HCT116 (cell line): ENCODE measurements at regions of chr10 and their contacts with region 1.

Region 1: DNA sequence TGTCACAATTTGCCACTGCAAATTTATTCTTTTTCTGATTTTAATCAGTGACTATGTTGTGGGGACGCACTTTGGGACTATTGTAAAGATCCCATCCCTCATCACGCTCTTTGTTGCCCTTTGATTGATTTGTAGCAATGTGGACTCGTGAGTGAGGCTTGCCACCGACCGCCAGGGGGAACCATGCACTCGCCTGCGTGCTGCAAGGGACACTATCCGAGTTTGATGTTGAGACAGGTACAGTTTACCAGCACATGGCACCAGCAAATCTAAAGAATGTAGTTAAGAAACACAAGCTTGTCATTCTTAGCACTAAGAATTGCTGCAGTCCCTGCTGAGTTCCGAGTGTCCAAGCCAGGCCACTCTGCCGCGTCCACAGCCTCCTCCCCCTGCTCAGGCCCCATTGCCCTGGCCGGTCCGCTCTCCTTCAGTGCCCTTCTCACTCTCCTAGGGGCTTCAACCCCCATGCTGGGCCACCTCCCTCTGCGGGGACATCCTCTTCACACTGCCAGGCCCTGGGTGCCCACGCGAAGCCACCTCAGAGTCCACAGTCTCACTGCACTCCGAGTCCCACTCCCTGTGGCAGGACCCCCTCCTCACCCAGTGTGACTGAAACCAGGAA is 2.0 kb upstream of the SFTPA2 start:
- DNase-seq: peak; percentile 34
- ATAC-seq: peak; percentile 98
- H3K4me3 ChIP-seq: no peak overlapping the region
- H3K27ac ChIP-seq: no peak overlapping the region
- H3K4me1 ChIP-seq: no peaks in the 10 kb centered on the region
- H3K27me3 ChIP-seq: no peaks in the 10 kb centered on the region
- CTCF ChIP-seq: peak; percentile 82 to 95 (median 94)
- POLR2A ChIP-seq: no peak
- RAD21 ChIP-seq: peak; percentile 83

Region 2: DNA sequence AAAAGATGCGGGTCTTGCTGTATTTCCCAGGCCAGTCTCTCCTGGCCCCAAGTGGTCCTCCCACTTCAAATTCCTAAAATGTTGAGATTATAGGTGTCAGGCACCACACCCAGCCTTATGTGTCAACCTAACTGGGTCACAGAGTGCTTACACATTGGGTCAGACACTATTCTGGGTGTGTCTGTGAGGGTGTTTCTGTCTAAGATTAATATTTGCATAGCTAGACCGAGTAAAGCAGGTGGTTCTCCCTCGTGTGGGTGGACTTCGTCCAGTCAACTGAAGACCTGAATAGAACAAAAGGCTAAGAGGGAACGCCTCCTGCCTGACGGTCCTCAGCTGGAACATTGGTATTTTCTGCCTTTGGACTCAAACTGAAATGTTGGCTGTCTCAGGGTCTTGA is 203.5 kb before region 1 on chr10:
- CTCF ChIA-PET with region 1: no interaction called
- POLR2A ChIA-PET with region 1: no interaction called
- RAD21 ChIA-PET with region 1: no interaction called
- intact Hi-C with region 1: no loop called
- DNase-seq: no peak
- ATAC-seq: no peak
- H3K4me3 ChIP-seq: no peak overlapping the region
- H3K27ac ChIP-seq: no peak overlapping the region
- H3K4me1 ChIP-seq: no peaks in the 10 kb centered on the region
- H3K27me3 ChIP-seq: no peaks in the 10 kb centered on the region
- CTCF ChIP-seq: no peak
- POLR2A ChIP-seq: no peak
- RAD21 ChIP-seq: no peak

Region 3: GRCh38 chr10:79586933-79587332 is 24.7 kb after region 1 on chr10:
- CTCF ChIA-PET with region 1: no interaction called
- POLR2A ChIA-PET with region 1: no interaction called
- RAD21 ChIA-PET with region 1: no interaction called
- intact Hi-C with region 1: no loop called
- DNase-seq: no peak
- ATAC-seq: no peak
- H3K4me3 ChIP-seq: no peak overlapping the region
- H3K27ac ChIP-seq: no peak overlapping the region
- H3K4me1 ChIP-seq: no peaks in the 10 kb centered on the region
- H3K27me3 ChIP-seq: peaks cover 7% of the 10 kb centered on the region
- CTCF ChIP-seq: no peak
- POLR2A ChIP-seq: no peak
- RAD21 ChIP-seq: no peak

Region 4: GRCh38 chr10:79608505-79609375 is 46.5 kb after region 1 on chr10:
- CTCF ChIA-PET with region 1: no interaction called
- POLR2A ChIA-PET with region 1: no interaction called
- RAD21 ChIA-PET with region 1: no interaction called
- intact Hi-C with region 1: loop called (anchors 2 kb)
- DNase-seq: peak; percentile 24
- ATAC-seq: peak; percentile 90
- H3K4me3 ChIP-seq: no peak overlapping the region
- H3K27ac ChIP-seq: no peak overlapping the region
- H3K4me1 ChIP-seq: no peaks in the 10 kb centered on the region
- H3K27me3 ChIP-seq: no peaks in the 10 kb centered on the region
- CTCF ChIP-seq: peak; percentile 93 to 94 (median 94)
- POLR2A ChIP-seq: no peak
- RAD21 ChIP-seq: peak; percentile 79

Region 5: DNA sequence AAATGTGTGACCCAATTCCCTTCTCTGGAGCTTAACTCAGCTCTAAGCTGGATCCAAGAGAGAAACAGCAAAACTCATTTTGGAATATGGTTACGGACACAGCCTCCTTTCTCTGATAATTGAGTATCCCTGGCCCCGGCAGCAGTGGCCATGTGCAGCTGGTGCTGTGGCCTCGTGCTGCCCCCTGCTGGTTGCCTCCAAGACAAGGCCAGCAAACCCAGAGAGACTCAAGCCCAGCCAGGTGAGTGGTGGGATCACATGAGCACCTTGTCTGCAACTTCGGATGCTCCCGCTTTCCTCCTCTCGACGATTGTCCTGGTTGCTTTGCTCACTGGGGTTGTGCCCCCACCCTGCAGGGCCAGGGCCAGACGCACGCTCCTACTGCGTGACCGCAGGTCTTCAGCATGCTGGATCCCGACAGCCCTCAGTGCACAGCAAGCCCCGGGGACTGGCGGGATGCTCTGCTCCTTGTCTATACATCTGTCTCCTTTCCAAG is 367.2 kb after region 1 on chr10:
- CTCF ChIA-PET with region 1: no interaction called
- POLR2A ChIA-PET with region 1: no interaction called
- RAD21 ChIA-PET with region 1: no interaction called
- intact Hi-C with region 1: loop called (anchors 1 kb)
- DNase-seq: peak; percentile 62
- ATAC-seq: peak; percentile 98
- H3K4me3 ChIP-seq: no peak overlapping the region
- H3K27ac ChIP-seq: no peak overlapping the region
- H3K4me1 ChIP-seq: peaks cover 0 to 5% of the 10 kb centered on the region in 2 experiments; a peak in 1 of 4 replicates
- H3K27me3 ChIP-seq: 0 out of 2 replicates have a peak, but pooled peaks cover 5% of the 10 kb centered on the region
- CTCF ChIP-seq: peak; percentile 89 to 94 (median 93)
- POLR2A ChIP-seq: no peak
- RAD21 ChIP-seq: peak; percentile 97

Region 6: DNA sequence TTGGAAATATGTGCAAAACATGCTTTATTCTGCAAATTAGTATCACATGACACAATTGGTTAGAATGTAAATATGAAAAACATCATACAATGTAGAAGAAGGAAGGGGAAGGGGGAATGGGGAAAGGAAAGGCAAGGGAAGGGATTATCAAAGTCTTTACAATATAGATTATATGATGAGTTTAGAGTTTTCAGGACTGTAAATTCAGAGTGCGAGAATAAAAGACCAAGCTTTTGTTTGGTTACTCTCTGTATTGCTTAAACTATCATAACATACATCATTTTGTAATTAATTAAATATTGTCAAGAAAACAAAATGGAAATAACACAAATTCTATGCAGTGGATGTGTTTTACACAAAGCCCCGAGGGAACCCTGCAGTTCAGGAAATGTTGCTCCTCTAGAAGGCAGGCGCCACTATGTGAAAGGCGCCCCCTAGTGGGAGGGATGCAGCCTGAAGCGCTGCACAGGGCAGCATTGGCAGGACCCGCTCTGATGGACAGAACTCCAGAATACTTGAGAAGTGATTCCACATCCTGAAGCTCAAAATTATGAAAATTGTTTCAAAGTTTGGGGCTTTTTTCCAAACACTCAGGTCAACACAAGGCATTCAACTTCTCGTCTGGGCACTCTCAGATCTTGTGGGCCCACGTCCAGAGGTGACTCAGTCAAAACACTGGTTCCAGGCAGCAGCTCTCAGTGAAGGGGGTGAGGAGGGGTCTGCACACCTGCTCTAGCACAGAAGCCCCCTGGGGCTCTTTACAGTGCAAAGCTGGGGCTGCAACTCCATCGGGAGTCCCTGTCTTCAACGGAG is 484.6 kb after region 1 on chr10:
- CTCF ChIA-PET with region 1: interaction called, 3 read pairs
- POLR2A ChIA-PET with region 1: no interaction called
- RAD21 ChIA-PET with region 1: no interaction called
- intact Hi-C with region 1: loop called (anchors 10 kb)
- DNase-seq: peak; percentile 43
- ATAC-seq: peak; percentile 98
- H3K4me3 ChIP-seq: no peak overlapping the region
- H3K27ac ChIP-seq: no peak overlapping the region
- H3K4me1 ChIP-seq: no peaks in the 10 kb centered on the region
- H3K27me3 ChIP-seq: no peaks in the 10 kb centered on the region; the same call in 1 of the 2 replicates
- CTCF ChIP-seq: peak; percentile 84 to 98 (median 97); a peak in 5 of 6 replicates
- POLR2A ChIP-seq: no peak
- RAD21 ChIP-seq: peak; percentile 80